Activated T-helper 2 cell treated with anti-CD3 and anti-CD28 coated beads, Interferon-gamma antibody, Interleukin-2, Interleukin-4, amounts not matched to agents 10 μg/mL and 5 μg/mL and 100 μg/mL, durations not matched to agents 14 hours and 24 hours and 36 hours (primary cell): ENCODE measurements at regions of chr15 and their contacts with region 1.

Region 1: DNA sequence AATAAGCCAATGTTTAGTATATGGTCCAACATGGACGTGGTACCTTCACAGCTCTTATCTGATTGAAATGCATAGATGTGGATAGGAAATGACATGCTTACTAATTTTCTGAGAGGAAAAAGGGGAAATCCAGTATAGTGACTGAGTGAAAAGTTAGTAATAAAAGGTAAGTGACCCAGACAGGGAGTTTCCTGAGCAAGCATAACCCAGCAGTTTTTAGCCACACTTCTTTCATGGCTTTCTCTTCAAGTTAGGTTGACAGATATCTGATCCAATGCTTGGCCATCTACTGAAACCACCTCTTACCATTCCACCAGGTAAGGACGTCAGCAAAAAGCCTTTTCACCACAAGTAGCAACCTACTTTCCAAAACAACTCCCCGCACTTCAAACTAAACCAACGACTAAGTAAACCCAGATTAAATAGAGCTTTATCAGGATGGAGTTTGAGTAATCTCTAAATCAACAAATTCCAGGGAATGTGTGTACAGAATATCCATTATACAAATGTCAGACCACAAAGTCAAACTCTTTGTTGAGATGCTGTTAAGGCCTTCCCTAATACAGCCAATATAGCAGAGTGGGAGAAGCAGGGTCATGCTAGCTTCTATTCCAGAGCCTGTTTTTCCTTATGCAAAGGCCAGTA is 329.7 kb downstream of the RORA start:
- DNase-seq: no peak
- H3K4me3 Mint-ChIP-seq: no peak overlapping the region
- H3K27ac Mint-ChIP-seq: peak overlapping the region; percentile 64
- H3K4me1 Mint-ChIP-seq: peaks cover 52% of the 10 kb centered on the region
- H3K27me3 Mint-ChIP-seq: peaks cover 14% of the 10 kb centered on the region

Region 2: DNA sequence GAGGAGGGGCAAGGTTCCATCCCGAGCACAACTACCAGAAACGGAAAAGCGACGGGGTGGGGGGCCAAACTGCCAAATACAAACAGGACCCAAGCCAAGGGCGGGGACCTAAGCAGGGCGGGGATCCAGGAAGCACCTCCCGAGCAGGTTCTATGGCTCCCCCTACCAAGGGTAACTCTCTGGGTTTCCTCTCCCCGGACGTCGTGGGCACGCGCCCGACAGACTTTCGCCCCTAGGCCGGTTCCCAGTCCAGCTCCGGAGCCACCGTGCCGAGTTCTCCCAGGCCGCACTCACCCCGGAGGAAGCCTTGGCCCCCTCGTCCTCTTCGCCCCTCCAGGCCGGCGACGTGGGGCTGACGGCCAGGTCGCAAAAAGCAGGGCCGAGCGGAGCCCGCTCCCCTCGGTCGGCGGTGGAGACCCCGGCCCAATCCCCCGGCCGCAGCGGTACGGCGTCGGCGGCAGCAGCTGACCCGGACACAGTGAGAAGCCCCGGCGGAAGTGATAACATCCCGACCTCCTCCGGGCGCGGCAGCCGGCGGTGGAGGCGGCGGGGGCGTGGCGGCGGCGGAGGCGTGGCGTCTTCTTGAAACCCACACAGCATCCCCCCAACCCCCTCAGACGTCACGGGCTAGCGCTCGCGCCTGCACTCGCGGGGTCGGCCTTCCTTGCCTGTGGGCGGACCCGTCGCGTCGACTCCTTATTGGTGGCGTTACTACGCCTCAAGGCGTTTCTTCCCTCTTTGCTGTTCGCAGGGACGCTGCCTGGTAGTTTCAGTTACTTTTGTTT is 1210.4 kb before region 1 on chr15 and contains the start of gene BNIP2:
- intact Hi-C with region 1: loop called (anchors 5 kb)
- DNase-seq: peak; percentile 99
- H3K4me3 Mint-ChIP-seq: peak within 1 kb of the TSS; percentile 93
- H3K27ac Mint-ChIP-seq: peak within 1 kb of the TSS; percentile 98
- H3K4me1 Mint-ChIP-seq: peaks cover 42% of the 10 kb centered on the region
- H3K27me3 Mint-ChIP-seq: no peaks in the 10 kb centered on the region
- total RNA-seq, gene BNIP2: 59.4 and 60.5 TPM in 2 replicates

Region 3: GRCh38 chr15:60649845-60650548 is 249.4 kb before region 1 on chr15:
- intact Hi-C with region 1: loop called (anchors 1 kb)
- DNase-seq: peak; percentile 20
- H3K4me3 Mint-ChIP-seq: peak overlapping the region; percentile 50
- H3K27ac Mint-ChIP-seq: peak overlapping the region; percentile 71
- H3K4me1 Mint-ChIP-seq: peaks cover 27% of the 10 kb centered on the region
- H3K27me3 Mint-ChIP-seq: peaks cover 22% of the 10 kb centered on the region

Region 4: DNA sequence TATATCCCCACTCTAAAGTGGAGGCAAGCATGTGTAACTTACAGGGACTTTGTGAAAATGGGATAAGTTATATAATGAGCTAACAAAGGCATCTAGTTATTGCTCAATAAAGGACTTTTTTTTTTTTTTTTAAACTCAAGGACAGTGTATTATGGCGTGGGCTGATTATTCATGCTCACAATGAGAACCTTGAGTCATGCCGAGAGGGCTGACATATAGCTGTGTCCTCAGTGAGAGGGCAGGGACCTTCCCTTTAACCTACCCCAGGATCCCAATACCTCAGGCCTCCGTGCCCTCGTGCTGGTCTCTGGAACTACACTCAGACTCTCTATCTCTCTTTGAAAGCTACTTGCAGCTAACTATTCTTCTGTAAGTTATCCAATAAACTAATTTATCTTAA is 100.6 kb before region 1 on chr15:
- intact Hi-C with region 1: loop called (anchors 1 kb)
- DNase-seq: no peak
- H3K4me3 Mint-ChIP-seq: no peak overlapping the region
- H3K27ac Mint-ChIP-seq: no peak overlapping the region
- H3K4me1 Mint-ChIP-seq: peaks cover 39% of the 10 kb centered on the region
- H3K27me3 Mint-ChIP-seq: peaks cover 9% of the 10 kb centered on the region

Region 5: GRCh38 chr15:60840306-60840702 is 59.1 kb before region 1 on chr15:
- intact Hi-C with region 1: loop called (anchors 2 kb)
- DNase-seq: no peak
- H3K4me3 Mint-ChIP-seq: no peak overlapping the region
- H3K27ac Mint-ChIP-seq: no peak overlapping the region
- H3K4me1 Mint-ChIP-seq: peaks cover 65% of the 10 kb centered on the region
- H3K27me3 Mint-ChIP-seq: peaks cover 57% of the 10 kb centered on the region

Region 6: DNA sequence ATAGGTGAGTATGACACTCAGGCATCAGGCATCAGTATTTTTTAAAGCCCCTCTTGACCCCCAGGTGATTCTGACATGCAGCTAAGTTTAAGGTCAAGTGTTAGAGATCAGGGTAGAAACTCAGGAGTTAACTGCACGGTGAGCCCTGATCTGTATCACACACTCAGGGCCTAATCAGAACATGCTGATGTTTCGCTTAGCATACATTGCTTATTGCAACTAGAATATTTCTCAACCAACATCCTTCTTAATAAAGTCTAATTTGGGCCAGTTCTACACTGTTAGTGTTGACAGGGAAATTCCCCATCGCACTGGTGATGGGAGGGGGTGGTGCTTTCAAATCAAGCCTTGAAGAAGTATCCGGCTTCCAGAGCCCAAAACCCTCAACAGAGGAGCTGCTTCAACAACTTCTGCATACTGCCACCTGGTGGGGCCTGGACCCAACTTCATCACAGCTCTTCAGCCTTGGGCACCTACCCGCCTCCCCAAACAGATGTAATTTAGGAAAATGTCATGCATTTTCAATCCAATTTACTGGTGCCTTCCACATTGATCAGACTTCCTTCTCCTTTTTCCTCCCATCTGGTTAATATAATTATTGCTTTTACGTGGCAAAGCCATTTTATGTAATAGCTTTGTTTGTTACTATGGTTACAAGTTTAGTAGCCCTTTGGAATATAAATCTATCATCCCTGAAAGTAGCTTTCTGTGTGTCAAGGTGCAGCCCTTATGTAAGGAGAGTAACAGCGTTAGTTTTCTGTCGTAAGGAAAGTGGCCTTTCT is 17.4 kb after region 1 on chr15:
- intact Hi-C with region 1: no loop called
- DNase-seq: peak; percentile 69
- H3K4me3 Mint-ChIP-seq: no peak overlapping the region
- H3K27ac Mint-ChIP-seq: no peak overlapping the region
- H3K4me1 Mint-ChIP-seq: peaks cover 16% of the 10 kb centered on the region
- H3K27me3 Mint-ChIP-seq: peaks cover 27% of the 10 kb centered on the region